Activated T-helper 1 cell treated with anti-CD3 and anti-CD28 coated beads, Interleukin-12 subunit alpha, Interleukin-12 subunit beta, Interleukin-2, Interleukin-4 antibody, amounts not matched to agents 30 ng/mL and 10 ng/mL and 1 ng/mL, durations not matched to agents 14 hours and 24 hours and 36 hours (primary cell): ENCODE measurements at regions of chr19 and their contacts with region 1.

Region 1: DNA sequence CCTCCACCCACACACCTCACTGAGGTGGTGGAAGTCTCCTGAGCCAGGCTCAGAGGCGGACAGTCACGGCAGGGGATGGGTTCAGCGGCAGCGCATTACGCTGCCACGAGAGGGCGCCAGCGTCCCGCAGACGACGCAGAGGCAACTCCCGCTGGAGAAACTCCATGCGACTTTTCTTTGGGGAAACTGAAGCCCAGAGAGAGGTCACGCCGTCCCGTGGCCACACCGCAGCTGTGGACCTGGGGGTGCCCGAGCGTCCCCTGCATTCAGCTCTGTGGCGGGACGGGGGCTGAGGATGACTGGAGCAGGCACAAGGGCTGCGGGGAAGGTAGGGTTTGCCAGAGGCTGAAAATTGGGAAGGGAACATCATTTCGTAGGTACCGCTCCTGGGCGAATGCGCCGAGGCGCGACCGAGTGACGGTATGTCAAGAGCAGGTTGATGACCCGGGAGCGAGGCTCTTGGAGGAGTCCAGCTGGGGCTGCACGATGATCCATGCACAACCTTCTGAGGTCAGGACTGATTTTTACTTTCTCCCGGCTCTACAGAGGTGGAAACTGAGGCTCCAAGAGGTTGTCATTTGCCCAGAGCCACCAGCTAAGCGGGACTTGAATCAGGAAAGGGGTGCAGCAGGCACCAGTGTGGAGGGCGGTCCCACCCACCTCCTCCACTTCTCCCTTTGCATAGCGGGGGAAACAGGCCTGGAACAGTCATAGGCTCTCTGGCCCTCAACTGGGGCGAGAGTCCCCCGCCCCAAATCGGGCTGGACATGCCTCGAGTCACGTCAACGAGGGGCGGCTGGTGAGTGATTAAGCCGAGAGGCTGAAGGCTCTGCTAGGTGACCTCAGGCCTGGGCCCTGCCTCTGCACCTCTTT is 690 bp upstream of the ARRDC2 start:
- DNase-seq: peak; percentile 77
- H3K4me3 Mint-ChIP-seq: peak overlapping the region; percentile 93
- H3K27ac Mint-ChIP-seq: peak overlapping the region; percentile 93
- H3K4me1 Mint-ChIP-seq: peaks cover 47% of the 10 kb centered on the region
- H3K27me3 Mint-ChIP-seq: no peaks in the 10 kb centered on the region

Region 2: GRCh38 chr19:17932485-17933338 is 74.6 kb before region 1 on chr19 and contains the start of gene CCDC124:
- intact Hi-C with region 1: no loop called
- DNase-seq: peak; percentile 89
- H3K4me3 Mint-ChIP-seq: peak within 1 kb of the TSS; percentile 87
- H3K27ac Mint-ChIP-seq: peak within 1 kb of the TSS; percentile 82
- H3K4me1 Mint-ChIP-seq: peaks cover 21% of the 10 kb centered on the region
- H3K27me3 Mint-ChIP-seq: no peaks in the 10 kb centered on the region
- total RNA-seq, gene CCDC124: 122 and 128 TPM in 2 replicates

Region 3: DNA sequence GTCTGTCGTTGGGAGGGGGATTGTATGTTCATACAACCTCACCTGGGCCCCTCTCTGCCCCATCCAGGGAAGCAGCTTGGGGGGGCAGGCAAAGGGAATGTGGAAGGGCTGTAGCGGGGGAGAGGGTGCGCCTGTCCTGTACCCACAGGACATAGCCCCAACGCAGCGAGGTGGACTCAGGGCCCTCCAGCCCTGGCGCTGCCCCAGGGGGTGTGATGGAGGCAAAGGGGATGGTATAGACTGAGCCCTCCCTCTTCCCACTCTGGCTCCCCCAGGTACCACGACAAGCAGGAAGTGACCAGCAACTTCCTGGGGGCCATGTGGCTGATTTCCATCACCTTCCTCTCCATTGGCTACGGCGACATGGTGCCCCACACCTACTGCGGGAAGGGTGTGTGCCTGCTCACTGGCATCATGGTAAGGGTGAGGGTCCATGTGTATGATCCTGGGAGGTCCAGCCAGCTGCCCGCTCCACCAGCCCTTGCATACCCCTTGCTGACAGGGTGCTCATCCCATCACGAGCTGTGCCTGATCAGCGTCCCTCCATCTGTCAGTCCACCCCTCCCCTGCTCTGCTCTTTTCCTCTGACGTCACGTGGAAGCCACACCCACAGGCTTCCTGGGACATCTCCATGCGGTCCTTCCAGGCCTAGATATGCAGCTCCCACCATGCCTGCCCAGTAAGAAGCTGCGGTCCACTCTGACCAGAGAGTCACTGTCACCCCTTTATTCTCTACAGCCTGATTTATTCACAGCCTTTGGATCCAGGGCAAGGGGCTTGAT is 22.1 kb before region 1 on chr19:
- intact Hi-C with region 1: no loop called
- DNase-seq: no peak
- H3K4me3 Mint-ChIP-seq: no peak overlapping the region
- H3K27ac Mint-ChIP-seq: no peak overlapping the region
- H3K4me1 Mint-ChIP-seq: no peaks in the 10 kb centered on the region
- H3K27me3 Mint-ChIP-seq: peaks cover 8% of the 10 kb centered on the region

Region 4: DNA sequence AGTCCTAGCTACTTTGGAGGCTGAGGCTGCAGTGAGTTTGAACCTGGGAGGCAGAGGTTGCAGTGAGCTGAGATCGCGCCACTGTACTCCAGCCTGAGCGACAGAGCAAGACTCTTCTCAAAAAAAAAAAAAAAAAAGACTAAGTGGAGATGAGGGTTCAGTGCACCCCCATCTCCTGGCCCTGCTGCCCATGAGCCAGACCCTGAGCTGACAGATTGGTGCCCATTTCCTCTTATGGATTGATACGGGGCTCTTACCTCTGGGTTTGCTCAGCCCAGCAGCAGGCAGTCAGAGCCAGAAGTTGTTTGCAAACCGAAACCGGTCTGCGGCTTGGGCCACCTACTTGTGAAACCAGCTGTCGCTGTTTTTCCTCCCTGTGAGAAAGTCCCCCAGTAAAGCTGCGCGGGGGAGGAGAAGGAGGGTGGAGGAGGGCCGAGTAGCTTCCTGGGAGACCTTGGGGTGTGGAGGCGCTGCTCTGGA is 37.6 kb after region 1 on chr19:
- intact Hi-C with region 1: loop called (anchors 1 kb)
- DNase-seq: peak; percentile 88
- H3K4me3 Mint-ChIP-seq: peak overlapping the region; percentile 59
- H3K27ac Mint-ChIP-seq: peak overlapping the region; percentile 93
- H3K4me1 Mint-ChIP-seq: peaks cover 46% of the 10 kb centered on the region
- H3K27me3 Mint-ChIP-seq: peaks cover 3% of the 10 kb centered on the region

Region 5: DNA sequence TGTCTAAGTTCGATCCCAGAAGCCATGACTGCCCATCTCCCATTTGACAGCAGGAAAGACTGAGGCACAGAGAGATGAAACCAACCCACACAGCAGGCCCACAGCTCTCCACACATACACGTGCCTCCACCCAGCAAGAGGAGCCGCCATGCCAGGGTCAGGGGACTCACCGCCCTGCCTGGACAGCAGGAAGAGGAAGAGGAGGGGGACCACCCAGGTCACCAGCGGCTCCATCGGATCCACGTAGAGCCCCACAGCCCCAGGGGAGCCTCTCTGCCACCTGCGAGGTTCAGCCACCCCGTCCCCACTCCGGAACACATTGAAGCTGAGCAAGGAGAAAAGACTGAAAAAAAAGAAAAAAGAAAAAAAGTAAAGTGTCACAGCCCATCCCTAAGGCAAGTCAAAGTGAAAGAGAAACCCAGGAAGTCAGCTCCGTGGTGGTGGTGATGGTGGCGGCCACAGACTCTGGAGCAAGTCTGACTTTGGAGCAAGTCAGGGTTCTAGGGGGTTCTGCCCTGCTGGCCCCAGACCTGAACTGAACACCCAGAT is 79.4 kb after region 1 on chr19 and contains the start of gene IL12RB1:
- intact Hi-C with region 1: loop called (anchors 1 kb)
- DNase-seq: peak; percentile 75
- H3K4me3 Mint-ChIP-seq: peak within 1 kb of the TSS; percentile 97
- H3K27ac Mint-ChIP-seq: peak within 1 kb of the TSS; percentile 99
- H3K4me1 Mint-ChIP-seq: peaks cover 60% of the 10 kb centered on the region
- H3K27me3 Mint-ChIP-seq: no peaks in the 10 kb centered on the region
- total RNA-seq, gene IL12RB1: 44.5 and 47.5 TPM in 2 replicates

Region 6: GRCh38 chr19:18173572-18174288 is 166.4 kb after region 1 on chr19 and contains the start of gene IFI30:
- intact Hi-C with region 1: loop called (anchors 5 kb)
- DNase-seq: peak; percentile 65
- H3K4me3 Mint-ChIP-seq: peak within 1 kb of the TSS; percentile 91
- H3K27ac Mint-ChIP-seq: peak within 1 kb of the TSS; percentile 72
- H3K4me1 Mint-ChIP-seq: peaks cover 27% of the 10 kb centered on the region
- H3K27me3 Mint-ChIP-seq: peaks cover 3% of the 10 kb centered on the region
- total RNA-seq, gene IFI30: 45.3 and 49.9 TPM in 2 replicates

Region 7: DNA sequence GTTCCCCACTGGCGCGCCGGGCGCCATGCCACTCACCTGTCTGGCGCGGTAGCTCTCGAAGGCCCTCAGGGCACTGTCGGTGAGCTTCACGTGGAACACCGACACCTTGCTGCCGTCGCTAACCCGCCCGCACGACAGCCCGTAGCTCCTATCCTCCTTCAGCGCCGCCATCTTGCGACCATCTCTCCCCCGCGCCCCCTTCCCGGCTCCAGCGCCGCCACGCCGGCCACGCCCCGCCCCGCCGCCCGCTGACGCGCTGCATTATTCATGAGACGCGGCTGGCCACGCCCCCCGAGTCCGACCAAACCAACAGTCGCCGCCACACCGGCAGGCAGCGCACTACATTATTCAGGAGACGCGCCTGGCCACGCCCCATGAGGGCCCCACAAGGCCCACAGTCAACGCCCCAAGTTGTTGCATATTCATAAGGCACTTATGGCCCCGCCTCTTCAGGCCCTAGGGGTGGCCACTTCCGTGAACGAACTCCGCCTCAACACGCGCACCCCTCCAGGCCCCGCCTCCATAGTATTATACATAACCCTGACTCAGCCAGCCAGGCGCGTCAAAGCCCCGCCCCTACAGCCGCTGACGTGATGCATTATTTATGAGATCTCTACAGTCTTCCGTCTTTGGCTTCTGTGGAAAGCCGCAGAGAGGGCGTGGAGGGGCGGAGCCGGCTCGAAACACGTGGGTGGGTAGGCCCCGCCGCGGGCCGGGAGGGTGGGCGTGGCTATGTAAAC is 514.8 kb after region 1 on chr19 and contains the start of gene ELL:
- intact Hi-C with region 1: no loop called
- DNase-seq: peak; percentile 100
- H3K4me3 Mint-ChIP-seq: peak within 1 kb of the TSS; percentile 99
- H3K27ac Mint-ChIP-seq: peak within 1 kb of the TSS; percentile 93
- H3K4me1 Mint-ChIP-seq: peaks cover 12% of the 10 kb centered on the region
- H3K27me3 Mint-ChIP-seq: no peaks in the 10 kb centered on the region
- total RNA-seq, gene ELL: 23.6 and 24.1 TPM in 2 replicates